ENCODE measurements at regions of chr20 and their contacts with region 1.

Region 1: DNA sequence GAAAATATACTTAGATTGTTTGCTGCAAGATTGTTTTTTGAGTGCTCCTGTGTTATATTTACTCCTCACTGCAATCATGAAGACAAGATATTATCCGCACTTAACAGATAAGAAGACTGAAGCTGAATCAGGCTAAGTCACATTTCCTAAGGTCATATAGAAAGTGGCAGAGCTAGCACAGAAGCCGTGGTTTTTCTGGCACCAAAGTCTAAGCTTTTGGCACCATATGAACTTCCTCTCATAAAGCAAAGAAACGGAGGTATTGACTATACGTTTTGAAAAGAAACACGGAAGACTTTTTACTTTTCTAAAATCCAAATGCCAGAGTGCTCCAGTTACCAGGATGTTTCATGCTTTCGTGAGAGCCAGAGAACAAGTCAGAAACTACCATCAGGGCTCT is 9.3 kb upstream of the DTD1 start:
- DNase-seq: peak; percentile 45
- H3K4me3 ChIP-seq: no peak overlapping the region
- H3K27ac ChIP-seq: no peak overlapping the region
- H3K4me1 ChIP-seq: peaks cover 3% of the 10 kb centered on the region
- H3K27me3 ChIP-seq: peaks cover 0 to 2% of the 10 kb centered on the region in 2 experiments
- CTCF ChIP-seq: no peak
- POLR2A ChIP-seq: no peak

Region 2: DNA sequence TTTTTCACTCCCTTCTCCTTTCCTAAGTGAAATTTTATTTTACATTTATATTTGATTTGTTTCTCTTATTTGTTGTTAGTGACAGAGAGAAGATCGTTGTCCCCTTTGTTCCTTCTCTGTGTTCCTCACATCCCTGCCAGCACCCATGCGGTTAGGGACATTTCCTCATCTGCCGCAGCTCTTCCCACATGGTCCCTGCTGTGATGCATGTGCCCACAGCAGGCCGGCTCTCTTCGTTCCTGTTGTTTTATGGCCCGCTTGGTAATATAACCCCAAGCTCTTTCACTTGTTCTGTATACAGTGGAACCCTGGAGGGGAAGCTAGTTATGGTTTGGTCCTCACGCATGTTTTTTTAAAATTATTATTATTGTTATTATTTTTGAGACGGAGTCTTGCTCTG is 32.9 kb after region 1 on chr20:
- CTCF ChIA-PET with region 1: no interaction called
- POLR2A ChIA-PET with region 1: interaction called, 14 read pairs
- dilution Hi-C with region 1: no loop called
- intact Hi-C with region 1: no loop called
- DNase-seq: no peak
- H3K4me3 ChIP-seq: no peak overlapping the region
- H3K27ac ChIP-seq: no peak overlapping the region
- H3K4me1 ChIP-seq: no peaks in the 10 kb centered on the region
- H3K27me3 ChIP-seq: no peaks in the 10 kb centered on the region
- CTCF ChIP-seq: no peak
- POLR2A ChIP-seq: no peak

Measured in endothelial cell of umbilical vein (primary cell).